SK-N-SH (cell line): ENCODE measurements at regions of chr18 and their contacts with region 1.

Region 1: DNA sequence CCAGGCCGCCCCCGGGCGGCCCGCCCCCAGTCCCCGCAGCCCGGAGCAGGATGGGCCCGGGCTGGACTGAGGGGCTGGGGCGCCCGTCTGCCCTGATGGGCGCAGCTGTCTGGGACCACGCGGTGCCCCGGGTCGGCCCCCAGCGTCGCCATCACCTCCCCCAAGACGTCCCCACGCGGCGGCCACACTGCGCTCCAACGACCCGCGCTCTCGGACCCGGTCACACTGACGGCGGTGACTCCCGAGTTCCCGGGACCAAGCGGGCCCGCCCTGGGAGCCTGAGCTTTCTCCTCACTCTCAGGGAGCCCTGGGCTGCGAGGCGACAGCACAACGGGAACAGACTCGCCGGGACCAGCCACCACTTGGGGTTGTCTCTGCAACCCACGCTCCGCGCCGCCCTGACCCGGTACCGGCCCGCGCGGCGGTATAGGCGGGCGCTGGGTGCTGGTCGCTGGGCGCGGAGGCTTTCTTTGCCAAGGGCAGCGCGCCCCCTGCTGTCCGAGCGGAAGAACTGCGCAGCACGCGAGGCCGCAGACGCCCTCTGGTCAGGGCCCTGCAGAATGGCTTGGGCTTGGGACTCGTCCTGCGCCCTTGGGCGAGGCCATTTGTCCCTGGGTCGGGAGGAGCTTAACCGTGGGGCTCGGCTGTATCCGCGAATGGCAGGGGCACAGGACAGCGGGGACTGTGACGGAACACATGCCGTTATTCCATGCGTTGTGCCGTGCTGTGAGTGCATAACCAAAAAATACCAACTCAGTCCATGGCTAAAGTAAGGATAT is 54.8 kb upstream of the ANKRD62 start:
- DNase-seq: peak; percentile 86
- H3K4me3 ChIP-seq: peak overlapping the region; percentile 33 to 60
- H3K27ac ChIP-seq: no peak overlapping the region
- H3K4me1 ChIP-seq: peaks cover 0 to 2% of the 10 kb centered on the region in 2 experiments; a peak in 1 of 4 replicates
- H3K27me3 ChIP-seq: peaks cover 65% of the 10 kb centered on the region
- CTCF ChIP-seq: peak; percentile 93
- EP300 ChIP-seq: no peak
- RAD21 ChIP-seq: peak; percentile 82

Region 2: GRCh38 chr18:11733031-11733430 is 305.8 kb before region 1 on chr18:
- CTCF ChIA-PET with region 1: interaction called, 20 read pairs
- POLR2A ChIA-PET with region 1: no interaction called
- DNase-seq: peak; percentile 75
- H3K4me3 ChIP-seq: peak overlapping the region in 1 of 2 experiments; percentile 48; a peak in 3 of 4 replicates
- H3K27ac ChIP-seq: no peak overlapping the region
- H3K4me1 ChIP-seq: no peaks in the 10 kb centered on the region; a peak in 1 of 4 replicates
- H3K27me3 ChIP-seq: peaks cover 69% of the 10 kb centered on the region
- CTCF ChIP-seq: peak; percentile 85
- EP300 ChIP-seq: no peak
- RAD21 ChIP-seq: peak; percentile 76

Region 3: GRCh38 chr18:11937874-11938478 is 100.9 kb before region 1 on chr18:
- CTCF ChIA-PET with region 1: interaction called, 117 read pairs
- POLR2A ChIA-PET with region 1: no interaction called
- DNase-seq: peak; percentile 72
- H3K4me3 ChIP-seq: no peak overlapping the region; a peak in 1 of 4 replicates
- H3K27ac ChIP-seq: no peak overlapping the region
- H3K4me1 ChIP-seq: no peaks in the 10 kb centered on the region
- H3K27me3 ChIP-seq: peaks cover 36% of the 10 kb centered on the region
- CTCF ChIP-seq: peak; percentile 87
- EP300 ChIP-seq: no peak
- RAD21 ChIP-seq: peak; percentile 73

Region 4: DNA sequence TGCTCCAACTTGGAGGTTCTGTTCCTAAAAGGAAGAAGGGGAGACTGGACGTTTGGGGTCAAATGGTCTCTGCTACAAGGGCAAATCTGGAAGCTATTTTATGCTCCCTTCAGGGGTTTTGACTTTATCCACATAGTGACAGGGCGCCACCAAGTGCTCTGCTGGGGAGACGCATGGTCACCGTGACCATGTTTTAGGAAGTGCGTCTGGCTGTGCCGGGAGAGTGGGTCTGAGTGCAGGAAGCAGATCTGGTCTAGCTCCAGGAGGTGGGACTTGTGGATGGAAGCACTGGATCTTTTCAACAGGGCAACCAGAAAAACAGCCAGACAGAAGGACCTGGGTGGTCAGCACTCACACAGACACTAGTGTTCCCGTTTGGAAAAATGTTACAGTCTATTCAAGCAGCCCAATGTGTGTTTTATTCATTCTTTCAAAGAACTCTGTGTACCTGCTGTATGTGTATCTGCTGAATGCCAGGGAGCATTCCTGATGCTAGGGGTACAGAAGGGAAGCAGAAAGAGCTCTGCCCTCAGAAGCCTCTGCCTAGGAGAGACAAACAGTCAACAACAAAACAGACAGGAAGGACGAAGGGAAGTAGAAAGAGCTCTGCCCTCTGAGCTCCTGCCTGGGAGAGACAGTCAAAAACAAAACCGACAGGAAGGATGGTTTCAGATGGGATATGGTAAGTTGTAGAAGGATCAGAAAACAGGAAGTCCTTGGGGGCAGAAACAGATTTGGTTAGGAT is 43.2 kb before region 1 on chr18:
- CTCF ChIA-PET with region 1: interaction called, 14 read pairs
- POLR2A ChIA-PET with region 1: no interaction called
- DNase-seq: peak; percentile 74
- H3K4me3 ChIP-seq: no peak overlapping the region; a peak in 1 of 4 replicates
- H3K27ac ChIP-seq: no peak overlapping the region
- H3K4me1 ChIP-seq: no peaks in the 10 kb centered on the region
- H3K27me3 ChIP-seq: peaks cover 79% of the 10 kb centered on the region
- CTCF ChIP-seq: peak; percentile 63
- EP300 ChIP-seq: no peak
- RAD21 ChIP-seq: peak; percentile 75

Region 5: DNA sequence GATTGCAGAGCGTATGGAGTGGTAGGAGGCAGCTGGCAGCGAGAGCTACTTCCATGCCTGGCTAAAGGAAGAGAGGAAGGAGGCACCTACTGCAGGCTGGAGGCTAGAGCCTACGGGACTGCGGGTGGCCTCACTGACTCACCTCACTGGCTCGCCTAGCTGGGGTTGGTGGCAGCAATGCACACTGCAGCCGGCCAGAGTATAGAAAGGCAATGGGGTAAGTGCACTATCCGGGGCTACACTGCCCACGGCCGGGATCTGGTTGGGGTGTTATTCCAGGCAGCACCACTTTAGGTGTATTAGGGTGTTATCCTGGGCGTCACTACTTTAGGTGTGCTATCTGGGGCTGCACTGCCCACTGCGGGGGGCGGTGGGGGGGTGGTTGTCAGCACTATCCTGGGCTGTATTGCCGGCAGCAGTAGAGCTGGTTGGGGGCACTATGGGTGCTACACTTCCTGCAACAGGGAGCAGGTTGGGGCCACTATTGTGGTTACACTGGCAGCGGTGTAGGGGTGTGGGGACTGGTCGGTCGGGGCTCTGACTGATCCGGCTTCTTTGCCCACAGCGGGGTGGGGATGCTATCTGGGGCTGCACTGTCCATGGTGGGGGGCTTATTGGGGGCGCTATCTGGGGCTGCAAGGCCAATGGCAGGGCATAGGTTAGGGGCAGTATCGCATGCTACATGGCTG is 21.5 kb after region 1 on chr18:
- CTCF ChIA-PET with region 1: interaction called, 11 read pairs
- POLR2A ChIA-PET with region 1: no interaction called
- DNase-seq: peak; percentile 71
- H3K4me3 ChIP-seq: peak overlapping the region; percentile 30 to 50; a peak in 3 of 4 replicates
- H3K27ac ChIP-seq: no peak overlapping the region; a peak in 1 of 4 replicates
- H3K4me1 ChIP-seq: peaks cover 0 to 17% of the 10 kb centered on the region in 2 experiments; a peak in 1 of 4 replicates
- H3K27me3 ChIP-seq: no peaks in the 10 kb centered on the region; the same call in 1 of the 2 replicates
- CTCF ChIP-seq: peak; percentile 22; the same call in 1 of the 2 replicates
- EP300 ChIP-seq: no peak
- RAD21 ChIP-seq: no peak